HEK293 (cell line): ENCODE measurements at regions of chr9 and their contacts with region 1.

Region 1: GRCh38 chr9:104386425-104387069 is 117.5 kb upstream of the OR13F1 start:
- H3K4me3 ChIP-seq: no peak overlapping the region
- H3K27ac ChIP-seq: no peak overlapping the region
- H3K4me1 ChIP-seq: no peaks in the 10 kb centered on the region
- CTCF ChIP-seq: no peak

Region 2: GRCh38 chr9:103188781-103189350 is 1197.7 kb before region 1 on chr9:
- CTCF ChIA-PET with region 1: interaction called, 10 read pairs
- POLR2A ChIA-PET with region 1: no interaction called
- H3K4me3 ChIP-seq: no peak overlapping the region
- H3K27ac ChIP-seq: no peak overlapping the region
- H3K4me1 ChIP-seq: no peaks in the 10 kb centered on the region
- CTCF ChIP-seq: no peak

Region 3: DNA sequence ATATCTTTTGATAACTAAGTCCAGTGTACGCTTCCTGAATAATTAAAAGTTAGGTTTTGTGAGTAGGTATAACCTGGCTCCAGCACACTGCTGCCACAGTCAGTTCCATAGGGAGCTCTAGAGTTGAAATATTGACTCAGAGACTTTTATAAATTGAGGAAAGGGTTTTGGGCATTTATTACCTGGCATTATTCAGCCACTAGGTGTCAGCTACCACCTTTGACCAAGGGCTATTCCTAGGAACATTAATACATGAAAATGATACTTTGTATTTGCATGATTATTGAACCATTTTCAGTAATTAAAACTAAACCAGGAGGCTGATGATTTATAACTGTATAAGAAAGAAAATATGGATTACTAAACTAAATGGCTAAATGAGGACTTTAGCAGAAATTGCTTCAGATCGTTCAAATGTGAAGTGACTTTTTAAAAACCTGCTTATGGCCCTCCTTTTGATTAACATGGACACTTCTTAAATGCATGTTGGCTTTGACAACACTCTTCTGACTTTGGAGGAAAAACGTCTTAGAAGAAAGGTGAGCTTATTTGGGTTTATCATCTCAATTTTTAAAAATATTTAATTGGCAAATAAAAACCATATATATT is 209.4 kb before region 1 on chr9:
- CTCF ChIA-PET with region 1: interaction called, 77 read pairs
- POLR2A ChIA-PET with region 1: no interaction called
- H3K4me3 ChIP-seq: no peak overlapping the region
- H3K27ac ChIP-seq: no peak overlapping the region
- H3K4me1 ChIP-seq: no peaks in the 10 kb centered on the region
- CTCF ChIP-seq: no peak

Region 4: DNA sequence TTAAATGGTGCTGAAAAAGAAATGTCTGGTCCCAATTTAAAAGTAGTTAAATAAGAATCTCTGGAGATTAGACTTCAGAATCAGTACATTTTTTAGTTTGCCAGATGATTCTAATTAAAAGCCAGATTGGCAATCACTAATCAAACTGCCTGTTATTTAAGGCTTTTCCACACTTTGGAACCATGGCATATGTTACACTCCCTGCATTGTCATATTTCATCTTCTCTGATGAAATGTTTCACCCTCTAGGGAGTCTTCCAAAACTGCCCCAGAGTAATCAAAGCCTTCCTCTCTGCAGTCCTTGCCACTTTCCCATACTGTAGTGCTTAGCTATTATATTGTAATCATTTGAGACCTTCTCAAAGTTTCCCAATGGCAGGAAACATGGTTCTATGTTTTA is 248.9 kb after region 1 on chr9:
- CTCF ChIA-PET with region 1: no interaction called
- POLR2A ChIA-PET with region 1: no interaction called
- H3K4me3 ChIP-seq: no peak overlapping the region
- H3K27ac ChIP-seq: no peak overlapping the region
- H3K4me1 ChIP-seq: no peaks in the 10 kb centered on the region
- CTCF ChIP-seq: no peak